ENCODE measurements at regions of chr10 and their contacts with region 1.

Region 1: DNA sequence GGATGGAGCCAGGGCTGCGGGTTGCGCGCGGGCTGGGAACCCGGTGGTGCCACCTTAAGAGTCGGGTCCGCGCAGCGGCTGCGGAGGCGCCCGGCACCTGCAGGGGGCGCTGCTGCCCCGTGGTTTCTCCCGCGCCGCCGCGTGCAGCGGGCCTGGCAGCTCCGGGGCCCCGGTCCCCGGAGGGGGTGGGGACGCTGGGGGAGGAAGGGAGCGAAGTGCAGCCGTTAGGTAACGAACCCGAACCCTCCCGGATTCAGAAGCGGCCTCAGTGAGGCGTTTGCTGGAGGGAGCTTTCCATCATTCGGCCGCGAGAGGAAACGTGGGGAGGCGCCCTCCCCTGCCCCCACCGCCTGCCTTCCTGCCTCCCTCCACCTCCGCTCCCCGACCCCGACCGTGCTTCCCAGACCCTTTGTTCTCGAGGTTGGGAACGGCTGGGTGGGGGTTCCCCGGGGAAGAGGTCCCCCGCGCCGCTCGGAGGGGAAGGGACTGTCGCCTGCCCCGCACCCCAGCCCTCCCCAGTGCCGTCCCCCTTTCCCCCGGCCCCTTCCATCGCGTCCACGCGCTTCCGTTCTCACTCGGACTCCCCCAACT is 29.6 kb downstream of the SKIDA1 start:
- DNase-seq: peak; percentile 94
- H3K4me3 Mint-ChIP-seq: peak overlapping the region; percentile 78
- H3K27ac Mint-ChIP-seq: no peak overlapping the region
- H3K4me1 Mint-ChIP-seq: no peaks in the 10 kb centered on the region
- H3K27me3 Mint-ChIP-seq: peaks cover 24% of the 10 kb centered on the region
- CTCF ChIP-seq: peak; percentile 92

Region 2: DNA sequence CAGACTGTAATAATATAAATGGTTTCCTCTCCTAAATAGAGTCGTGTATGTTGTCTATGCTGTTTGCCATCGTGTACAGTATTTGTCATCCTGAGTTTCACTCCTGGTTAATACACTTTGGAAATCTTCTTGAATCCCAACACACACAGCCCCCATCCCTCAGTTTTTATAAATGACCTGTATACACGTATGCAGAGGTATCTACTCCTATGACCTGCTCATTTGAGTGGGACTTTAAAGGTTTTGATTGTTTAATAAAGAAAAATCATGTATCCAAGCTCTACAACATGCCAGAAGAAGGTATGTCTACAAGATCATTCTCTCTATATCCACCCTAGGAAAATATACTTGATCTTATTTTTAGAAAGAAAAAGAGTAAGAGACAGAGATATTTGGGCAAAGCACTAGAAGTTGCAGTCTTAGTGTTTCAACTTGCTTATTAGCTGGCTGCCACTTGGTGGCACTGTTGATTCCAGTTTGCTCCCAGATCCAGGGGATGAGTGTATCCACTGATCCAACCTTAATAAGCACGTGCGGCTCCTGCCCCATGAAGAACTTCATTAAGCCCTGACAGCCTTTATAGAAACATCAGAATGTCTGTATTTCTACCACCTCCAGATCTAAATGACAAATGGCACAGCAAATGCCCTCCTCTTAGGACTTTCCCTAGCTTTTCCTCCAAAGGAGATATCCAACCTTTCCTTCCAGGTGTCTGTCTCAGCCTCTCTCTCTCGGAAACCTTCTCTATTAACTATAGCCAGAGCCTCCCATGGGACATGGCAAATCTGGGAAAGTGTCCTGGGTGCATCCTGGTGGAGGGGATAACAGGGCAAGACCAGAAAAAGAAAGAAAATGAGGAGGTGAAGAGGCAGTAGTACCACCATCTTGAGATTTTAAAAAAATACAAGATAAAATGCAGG is 417.2 kb before region 1 on chr10:
- CTCF ChIA-PET with region 1: interaction called, 3 read pairs
- intact Hi-C with region 1: loop called (anchors 10 kb)
- DNase-seq: peak; percentile 73
- H3K4me3 Mint-ChIP-seq: no peak overlapping the region
- H3K27ac Mint-ChIP-seq: peak overlapping the region; percentile 47
- H3K4me1 Mint-ChIP-seq: peaks cover 9% of the 10 kb centered on the region
- H3K27me3 Mint-ChIP-seq: no peaks in the 10 kb centered on the region
- CTCF ChIP-seq: peak; percentile 73

Region 3: DNA sequence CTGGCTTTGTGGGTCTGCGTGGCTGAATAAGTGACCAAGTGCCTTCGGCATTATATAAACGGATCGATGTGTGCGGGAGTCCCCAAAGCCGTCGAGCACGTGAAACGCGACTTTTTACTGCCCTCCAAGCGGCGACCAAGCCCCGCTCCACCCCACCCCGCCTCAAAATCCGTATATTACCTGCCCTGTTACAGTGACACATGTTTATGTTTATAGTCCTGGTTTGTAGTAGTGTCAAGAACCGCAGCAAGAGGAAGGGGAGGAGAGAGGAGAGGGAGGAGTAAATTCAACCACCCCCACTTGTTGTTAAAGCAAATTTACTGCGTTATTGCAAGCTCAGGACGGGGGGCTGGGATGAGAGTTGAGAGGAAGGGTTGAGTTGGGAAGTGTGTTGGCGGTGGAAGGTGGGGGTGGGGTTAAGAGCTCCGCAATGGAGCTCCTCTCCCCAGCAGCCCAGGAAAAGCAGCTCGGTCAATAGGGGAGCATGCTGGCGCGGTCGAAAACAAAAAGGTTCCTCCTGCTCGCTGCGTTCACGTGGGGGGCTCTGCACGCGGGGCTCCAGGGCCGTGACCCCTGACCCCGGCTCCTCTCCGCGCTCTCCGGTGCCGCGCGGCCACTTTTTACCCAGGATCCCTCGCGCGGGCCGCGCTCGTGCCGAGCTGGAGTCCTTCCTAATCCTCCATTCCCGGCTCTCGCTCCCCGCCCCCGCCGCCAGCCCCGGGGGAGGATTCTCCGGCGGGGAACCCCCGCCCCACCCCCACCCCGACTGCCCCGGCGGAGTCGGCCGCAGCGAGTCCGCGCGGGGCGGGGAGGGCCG is 29.7 kb after region 1 on chr10 and contains the start of gene SKIDA1:
- CTCF ChIA-PET with region 1: interaction called, 11 read pairs
- intact Hi-C with region 1: no loop called
- DNase-seq: peak; percentile 72
- H3K4me3 Mint-ChIP-seq: peak within 1 kb of the TSS; percentile 76
- H3K27ac Mint-ChIP-seq: peak within 1 kb of the TSS; percentile 70
- H3K4me1 Mint-ChIP-seq: no peaks in the 10 kb centered on the region
- H3K27me3 Mint-ChIP-seq: peaks cover 14% of the 10 kb centered on the region
- CTCF ChIP-seq: no peak
- total RNA-seq, gene SKIDA1: 0.40 TPM in 1 of 2 replicates, not detected in the other

Region 4: GRCh38 chr10:21724695-21725367 is 229.0 kb after region 1 on chr10:
- CTCF ChIA-PET with region 1: interaction called, 6 read pairs
- intact Hi-C with region 1: loop called (anchors 5 kb)
- DNase-seq: peak; percentile 90
- H3K4me3 Mint-ChIP-seq: no peak overlapping the region
- H3K27ac Mint-ChIP-seq: peak overlapping the region; percentile 27
- H3K4me1 Mint-ChIP-seq: peaks cover 27% of the 10 kb centered on the region
- H3K27me3 Mint-ChIP-seq: no peaks in the 10 kb centered on the region
- CTCF ChIP-seq: no peak

Region 5: GRCh38 chr10:21953585-21954057 is 457.8 kb after region 1 on chr10:
- CTCF ChIA-PET with region 1: interaction called, 20 read pairs
- intact Hi-C with region 1: loop called (anchors 1 kb)
- DNase-seq: no peak
- H3K4me3 Mint-ChIP-seq: no peak overlapping the region
- H3K27ac Mint-ChIP-seq: no peak overlapping the region
- H3K4me1 Mint-ChIP-seq: no peaks in the 10 kb centered on the region
- H3K27me3 Mint-ChIP-seq: no peaks in the 10 kb centered on the region
- CTCF ChIP-seq: no peak